MCF 10A (cell line): ENCODE measurements at regions of chr2 and their contacts with region 1.

Region 1: DNA sequence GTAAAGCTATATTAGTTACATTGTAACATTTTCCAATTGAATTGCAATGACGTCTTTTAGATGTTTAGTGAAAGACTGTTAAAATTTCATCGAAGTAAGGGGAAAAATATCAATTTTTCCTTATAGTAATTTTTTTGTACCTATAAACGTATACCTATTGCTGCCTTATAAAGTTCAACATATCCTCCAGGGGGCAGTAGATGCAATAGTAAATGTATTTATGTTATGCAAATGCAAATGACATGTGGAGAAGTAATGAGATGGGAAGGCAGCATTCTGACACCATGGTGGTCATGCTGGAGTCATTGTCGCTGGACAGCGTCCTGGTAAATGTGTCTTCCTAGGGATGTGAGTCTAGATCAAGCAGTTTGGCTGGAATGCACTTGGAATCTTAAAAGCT is 38.7 kb downstream of the MSTN start:
- DNase-seq: peak; percentile 75
- H3K4me3 Mint-ChIP-seq: no peak overlapping the region
- H3K27ac Mint-ChIP-seq: no peak overlapping the region
- H3K4me1 Mint-ChIP-seq: no peaks in the 10 kb centered on the region
- H3K27me3 Mint-ChIP-seq: no peaks in the 10 kb centered on the region
- CTCF ChIP-seq: peak; percentile 33

Region 2: GRCh38 chr2:189719571-189719970 is 304.3 kb before region 1 on chr2:
- CTCF ChIA-PET with region 1: no interaction called
- POLR2A ChIA-PET with region 1: no interaction called
- intact Hi-C with region 1: no loop called
- DNase-seq: no peak
- H3K4me3 Mint-ChIP-seq: no peak overlapping the region
- H3K27ac Mint-ChIP-seq: no peak overlapping the region
- H3K4me1 Mint-ChIP-seq: no peaks in the 10 kb centered on the region
- H3K27me3 Mint-ChIP-seq: no peaks in the 10 kb centered on the region
- CTCF ChIP-seq: no peak

Region 3: DNA sequence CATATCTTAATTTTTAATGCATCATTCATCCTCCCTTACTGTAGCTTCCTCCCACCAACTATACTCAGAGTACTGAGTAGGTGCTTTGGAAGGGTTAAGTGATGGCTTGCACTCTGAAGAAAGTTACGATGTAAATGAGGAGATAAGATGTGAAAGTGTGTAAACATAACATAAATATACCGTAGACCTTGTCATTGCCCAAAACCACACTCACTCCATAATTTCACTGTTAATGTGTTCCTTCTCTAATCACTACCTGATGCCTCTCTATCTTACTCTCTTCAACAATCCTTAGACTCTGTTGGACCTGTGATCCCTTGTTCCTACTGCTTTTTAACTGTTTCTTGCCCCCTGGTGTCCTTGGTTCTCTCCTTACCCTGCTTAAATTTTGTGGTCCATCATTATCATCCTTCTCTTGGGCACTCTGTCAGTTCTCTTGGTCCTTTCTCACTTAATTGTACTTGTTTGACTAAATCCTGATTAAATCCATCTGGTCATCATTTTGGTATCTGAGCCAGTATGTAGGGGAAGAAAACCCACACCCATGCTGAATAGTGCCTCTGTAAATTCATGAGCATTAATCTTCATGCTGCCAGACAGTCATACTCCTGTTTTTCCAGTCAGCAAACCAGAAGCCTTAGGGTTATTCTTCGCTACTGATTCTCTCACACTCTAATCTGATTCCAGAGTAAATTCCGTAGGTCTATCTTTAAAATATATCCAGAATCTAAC is 194.6 kb before region 1 on chr2:
- CTCF ChIA-PET with region 1: no interaction called
- POLR2A ChIA-PET with region 1: no interaction called
- intact Hi-C with region 1: no loop called
- DNase-seq: no peak
- H3K4me3 Mint-ChIP-seq: no peak overlapping the region
- H3K27ac Mint-ChIP-seq: no peak overlapping the region
- H3K4me1 Mint-ChIP-seq: no peaks in the 10 kb centered on the region
- H3K27me3 Mint-ChIP-seq: no peaks in the 10 kb centered on the region
- CTCF ChIP-seq: no peak

Region 4: DNA sequence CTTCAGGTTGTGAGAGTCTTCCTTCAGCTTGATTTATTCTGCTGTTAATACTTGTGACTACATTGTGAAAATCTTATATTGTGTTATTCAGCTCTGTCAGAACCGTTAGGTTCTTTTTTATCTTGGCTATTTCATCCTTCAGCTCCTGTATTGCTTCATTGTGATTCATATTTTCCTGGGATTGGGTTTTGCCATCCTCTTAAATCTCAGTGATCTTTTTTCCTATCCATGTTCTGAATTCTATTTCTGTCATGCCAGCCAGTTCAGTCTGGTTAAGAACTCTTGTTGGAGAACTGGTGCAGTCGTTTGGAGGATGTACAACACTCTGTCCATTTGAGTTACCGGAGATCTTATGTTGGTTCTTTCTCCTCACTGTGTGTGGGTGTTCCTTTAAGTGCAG is 19.6 kb after region 1 on chr2:
- CTCF ChIA-PET with region 1: interaction called, 13 read pairs
- POLR2A ChIA-PET with region 1: interaction called, 3 read pairs
- intact Hi-C with region 1: no loop called
- DNase-seq: peak; percentile 11
- H3K4me3 Mint-ChIP-seq: no peak overlapping the region
- H3K27ac Mint-ChIP-seq: no peak overlapping the region
- H3K4me1 Mint-ChIP-seq: peaks cover 11% of the 10 kb centered on the region
- H3K27me3 Mint-ChIP-seq: no peaks in the 10 kb centered on the region
- CTCF ChIP-seq: no peak

Region 5: GRCh38 chr2:190079160-190079559 is 55.3 kb after region 1 on chr2:
- CTCF ChIA-PET with region 1: interaction called, 11 read pairs
- POLR2A ChIA-PET with region 1: no interaction called
- intact Hi-C with region 1: no loop called
- DNase-seq: no peak
- H3K4me3 Mint-ChIP-seq: no peak overlapping the region
- H3K27ac Mint-ChIP-seq: no peak overlapping the region
- H3K4me1 Mint-ChIP-seq: no peaks in the 10 kb centered on the region
- H3K27me3 Mint-ChIP-seq: no peaks in the 10 kb centered on the region
- CTCF ChIP-seq: no peak

Region 6: DNA sequence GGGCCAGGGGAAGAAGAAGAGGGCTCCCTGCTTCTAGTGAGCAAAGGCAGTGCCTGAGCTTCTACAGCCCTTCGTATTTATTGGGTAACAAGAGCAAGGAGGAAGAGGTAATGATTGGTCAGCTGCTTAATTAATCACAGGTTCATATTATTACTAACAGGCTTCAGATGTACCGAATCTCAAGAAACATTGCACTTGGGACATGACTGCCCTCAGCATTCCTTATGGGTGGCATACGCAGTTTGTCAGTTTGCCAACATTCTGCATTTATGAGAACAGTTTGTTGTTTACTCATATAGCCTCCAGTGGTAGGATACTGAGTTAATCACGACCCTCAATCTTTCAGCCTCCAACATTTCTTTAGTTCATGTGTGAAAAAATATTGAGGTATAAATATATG is 211.2 kb after region 1 on chr2:
- CTCF ChIA-PET with region 1: no interaction called
- POLR2A ChIA-PET with region 1: no interaction called
- intact Hi-C with region 1: no loop called
- DNase-seq: no peak
- H3K4me3 Mint-ChIP-seq: no peak overlapping the region
- H3K27ac Mint-ChIP-seq: no peak overlapping the region
- H3K4me1 Mint-ChIP-seq: no peaks in the 10 kb centered on the region
- H3K27me3 Mint-ChIP-seq: no peaks in the 10 kb centered on the region
- CTCF ChIP-seq: no peak